Activated naive CD4-positive, alpha-beta T cell treated with anti-CD3 and anti-CD28 coated beads for 36 hours (primary cell): ENCODE measurements at regions of chr1 and their contacts with region 1.

Region 1: DNA sequence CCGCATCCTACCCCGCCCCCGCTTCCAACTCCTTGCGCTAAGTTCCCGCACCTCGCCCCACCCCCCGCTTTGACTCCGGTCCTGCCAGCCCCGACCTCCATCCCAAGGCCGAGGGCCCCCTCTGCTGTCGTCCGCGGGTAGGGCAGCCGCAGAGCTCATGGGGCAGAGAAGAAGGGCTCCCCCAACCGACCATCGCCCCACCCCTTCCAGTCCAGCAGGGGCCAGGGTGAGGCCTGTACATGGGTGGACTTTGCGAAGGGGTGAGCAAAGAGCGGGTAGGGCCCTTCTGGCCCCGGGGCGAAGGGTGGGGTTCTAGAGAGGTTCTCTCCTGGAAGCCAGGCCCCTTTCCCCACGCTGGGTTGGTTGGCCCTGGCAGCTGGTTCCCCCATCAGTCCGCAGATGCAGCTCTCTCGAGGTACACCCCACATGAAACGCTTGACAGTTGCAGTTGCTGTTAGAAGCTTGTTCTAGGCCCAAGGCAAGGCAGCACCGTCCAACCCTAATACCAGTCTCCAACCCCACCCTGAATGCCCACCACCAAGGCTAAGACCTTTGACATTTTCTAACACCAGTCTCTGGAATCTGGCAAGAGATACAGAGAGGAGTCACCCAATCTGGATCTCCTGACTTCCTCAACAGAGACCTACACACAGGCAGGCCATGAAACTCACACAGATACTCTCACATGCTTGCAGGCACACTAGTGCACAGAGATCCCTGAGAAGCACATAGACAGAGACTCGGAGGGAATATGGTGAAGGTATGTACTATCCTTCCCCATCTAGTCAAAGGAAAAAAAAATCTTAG is 25.3 kb upstream of the ADGRB2 start:
- DNase-seq: peak; percentile 98
- H3K4me3 Mint-ChIP-seq: peak overlapping the region; percentile 81
- H3K27ac Mint-ChIP-seq: no peak overlapping the region
- H3K4me1 Mint-ChIP-seq: peaks cover 6% of the 10 kb centered on the region
- H3K27me3 Mint-ChIP-seq: no peaks in the 10 kb centered on the region

Region 2: DNA sequence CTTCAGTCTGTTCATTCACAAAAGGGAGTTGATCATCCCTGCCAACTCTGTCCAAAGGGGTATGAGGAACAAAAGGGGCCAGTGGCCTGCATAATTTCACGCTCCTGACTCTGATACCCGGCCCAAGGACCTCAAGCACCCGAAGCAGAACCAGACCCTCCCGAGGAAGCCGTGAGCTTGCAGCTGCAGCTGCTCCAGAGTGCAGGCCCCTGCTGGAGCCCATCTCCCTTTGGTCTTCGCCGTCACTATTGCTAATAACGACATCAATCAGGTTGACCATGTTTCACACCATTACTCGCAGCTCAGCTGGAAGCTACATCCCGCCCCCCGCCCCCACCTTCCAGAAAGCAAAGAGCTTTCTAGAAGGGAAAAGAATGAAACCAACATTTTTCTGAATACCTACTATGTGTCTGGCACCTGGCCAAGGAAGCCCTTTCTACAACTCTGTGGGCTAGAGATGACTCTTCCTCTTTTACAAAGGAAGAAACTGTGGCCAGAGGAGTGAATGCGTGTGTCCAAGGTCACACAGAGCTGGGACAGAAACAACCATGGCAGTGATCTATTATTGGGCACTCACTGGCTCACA is 555.2 kb before region 1 on chr1:
- CTCF ChIA-PET with region 1: no interaction called
- intact Hi-C with region 1: loop called (anchors 5 kb)
- DNase-seq: no peak
- H3K4me3 Mint-ChIP-seq: no peak overlapping the region
- H3K27ac Mint-ChIP-seq: no peak overlapping the region
- H3K4me1 Mint-ChIP-seq: peaks cover 6% of the 10 kb centered on the region
- H3K27me3 Mint-ChIP-seq: peaks cover 25% of the 10 kb centered on the region

Region 3: DNA sequence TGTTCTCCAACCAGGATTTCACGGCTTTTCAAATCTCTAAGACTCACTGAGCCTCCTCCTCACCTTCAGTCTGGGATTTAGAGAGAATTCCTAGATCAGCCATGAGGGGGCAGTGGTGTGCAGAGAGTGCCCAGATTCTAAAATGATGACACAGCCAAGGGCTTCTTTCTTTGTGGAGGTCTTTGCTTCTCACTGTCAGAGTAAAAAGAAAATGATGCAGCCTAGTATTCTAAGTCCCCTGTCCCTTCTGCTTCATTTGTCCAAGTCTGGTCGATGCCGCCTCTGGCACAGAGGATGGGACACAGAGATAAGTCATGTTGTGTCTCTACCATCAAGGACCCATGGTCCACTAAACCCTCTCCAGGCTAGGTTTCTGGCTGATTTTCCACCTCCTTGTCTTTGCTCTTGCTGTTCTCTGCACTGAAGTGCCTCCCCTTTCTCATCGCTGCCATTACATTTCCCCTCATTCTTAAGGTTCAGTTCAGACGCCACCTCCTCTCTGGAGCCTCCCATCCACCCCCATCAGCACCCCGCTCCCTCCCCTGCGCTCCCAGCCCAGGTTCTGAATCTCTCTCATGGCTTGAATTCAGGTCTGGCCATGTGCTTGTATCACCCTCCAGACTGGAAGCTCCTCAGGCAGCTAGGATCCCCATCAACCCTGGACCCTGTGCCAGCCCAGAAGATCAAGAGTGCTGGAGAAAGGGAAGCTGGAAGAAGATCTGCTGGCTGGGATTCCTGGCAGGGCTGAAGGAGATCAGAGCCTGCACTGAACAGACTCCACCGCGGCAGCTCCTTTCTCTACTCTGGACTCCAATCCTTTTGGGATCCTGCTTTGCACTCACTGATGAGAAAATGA is 225.1 kb before region 1 on chr1:
- CTCF ChIA-PET with region 1: interaction called, 13 read pairs
- intact Hi-C with region 1: loop called (anchors 1 kb)
- DNase-seq: peak; percentile 68
- H3K4me3 Mint-ChIP-seq: no peak overlapping the region
- H3K27ac Mint-ChIP-seq: no peak overlapping the region
- H3K4me1 Mint-ChIP-seq: no peaks in the 10 kb centered on the region
- H3K27me3 Mint-ChIP-seq: peaks cover 15% of the 10 kb centered on the region

Region 4: DNA sequence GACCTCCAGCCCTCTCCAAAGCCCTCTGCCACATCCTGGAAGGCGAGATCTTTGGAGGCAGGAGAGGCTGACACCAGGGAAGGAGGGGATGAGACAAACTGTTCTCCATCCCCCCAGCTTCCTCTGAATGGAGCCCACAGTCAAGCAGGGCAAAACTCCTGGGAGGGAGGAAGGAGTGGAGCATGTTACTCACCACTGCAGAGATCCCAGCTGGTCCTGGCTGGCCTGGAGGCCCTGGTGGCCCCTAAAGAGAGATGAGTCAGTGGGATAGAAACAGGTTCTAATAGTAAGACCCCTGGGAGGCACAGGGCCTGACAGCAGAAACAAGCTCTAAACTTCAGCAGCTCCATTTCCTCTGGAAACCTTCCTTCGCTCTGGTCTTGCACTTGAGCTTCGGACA is 130.7 kb before region 1 on chr1:
- CTCF ChIA-PET with region 1: interaction called, 21 read pairs
- intact Hi-C with region 1: no loop called
- DNase-seq: no peak
- H3K4me3 Mint-ChIP-seq: no peak overlapping the region
- H3K27ac Mint-ChIP-seq: no peak overlapping the region
- H3K4me1 Mint-ChIP-seq: no peaks in the 10 kb centered on the region
- H3K27me3 Mint-ChIP-seq: no peaks in the 10 kb centered on the region

Region 5: GRCh38 chr1:31705080-31705866 is 84.2 kb before region 1 on chr1:
- CTCF ChIA-PET with region 1: interaction called, 16 read pairs
- intact Hi-C with region 1: loop called (anchors 2 kb)
- DNase-seq: peak; percentile 87
- H3K4me3 Mint-ChIP-seq: peak overlapping the region; percentile 16
- H3K27ac Mint-ChIP-seq: no peak overlapping the region
- H3K4me1 Mint-ChIP-seq: peaks cover 28% of the 10 kb centered on the region
- H3K27me3 Mint-ChIP-seq: peaks cover 37% of the 10 kb centered on the region

Region 6: DNA sequence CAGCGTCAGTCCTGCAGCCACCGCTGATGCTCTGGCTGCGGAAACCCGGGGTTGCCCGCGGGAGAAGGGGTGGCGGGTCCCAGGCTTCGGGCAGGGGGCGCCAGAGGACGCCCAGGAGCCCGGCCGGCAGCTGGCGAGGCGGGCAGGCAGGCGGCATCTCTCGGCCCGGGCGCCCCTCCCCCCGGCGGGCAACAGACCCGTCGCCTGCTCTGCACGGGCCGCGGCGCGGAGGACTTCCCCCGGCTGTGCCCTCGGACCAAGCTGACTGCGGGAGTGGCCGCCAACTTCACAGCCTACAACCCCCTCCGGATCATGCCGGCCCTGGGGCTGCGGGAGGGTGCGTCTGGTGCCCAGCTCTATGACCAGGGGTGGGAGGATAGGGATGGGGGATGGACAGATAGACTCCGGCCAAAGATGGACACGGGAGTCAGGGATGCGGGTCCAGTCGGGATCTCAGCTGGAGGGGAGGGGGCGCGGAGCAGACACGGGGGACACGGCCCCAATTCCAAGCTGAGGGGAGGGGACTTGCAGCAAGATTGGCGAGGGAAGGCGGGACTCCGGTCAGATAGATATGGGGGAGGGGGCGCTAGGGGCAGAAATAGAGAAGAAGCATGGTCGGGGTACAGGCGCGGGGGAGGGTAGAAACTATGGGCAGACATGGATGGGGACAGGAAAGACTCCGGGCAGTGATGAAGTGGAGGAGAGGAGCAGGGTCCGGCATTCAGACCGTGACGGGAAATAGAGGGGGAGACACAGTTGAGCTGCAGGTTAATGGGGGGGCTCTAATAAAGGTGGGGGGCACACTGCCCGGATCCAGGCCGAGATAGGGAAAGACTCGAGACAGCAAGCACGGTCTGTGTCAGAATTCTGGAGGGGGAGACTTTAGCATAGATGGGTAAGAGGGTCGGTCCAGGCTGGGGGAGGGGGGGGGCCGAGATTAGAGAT is 26.5 kb before region 1 on chr1:
- CTCF ChIA-PET with region 1: interaction called, 69 read pairs
- intact Hi-C with region 1: loop called (anchors 1 kb)
- DNase-seq: peak; percentile 80
- H3K4me3 Mint-ChIP-seq: peak overlapping the region; percentile 67
- H3K27ac Mint-ChIP-seq: no peak overlapping the region
- H3K4me1 Mint-ChIP-seq: peaks cover 20% of the 10 kb centered on the region
- H3K27me3 Mint-ChIP-seq: peaks cover 18% of the 10 kb centered on the region

Region 7: DNA sequence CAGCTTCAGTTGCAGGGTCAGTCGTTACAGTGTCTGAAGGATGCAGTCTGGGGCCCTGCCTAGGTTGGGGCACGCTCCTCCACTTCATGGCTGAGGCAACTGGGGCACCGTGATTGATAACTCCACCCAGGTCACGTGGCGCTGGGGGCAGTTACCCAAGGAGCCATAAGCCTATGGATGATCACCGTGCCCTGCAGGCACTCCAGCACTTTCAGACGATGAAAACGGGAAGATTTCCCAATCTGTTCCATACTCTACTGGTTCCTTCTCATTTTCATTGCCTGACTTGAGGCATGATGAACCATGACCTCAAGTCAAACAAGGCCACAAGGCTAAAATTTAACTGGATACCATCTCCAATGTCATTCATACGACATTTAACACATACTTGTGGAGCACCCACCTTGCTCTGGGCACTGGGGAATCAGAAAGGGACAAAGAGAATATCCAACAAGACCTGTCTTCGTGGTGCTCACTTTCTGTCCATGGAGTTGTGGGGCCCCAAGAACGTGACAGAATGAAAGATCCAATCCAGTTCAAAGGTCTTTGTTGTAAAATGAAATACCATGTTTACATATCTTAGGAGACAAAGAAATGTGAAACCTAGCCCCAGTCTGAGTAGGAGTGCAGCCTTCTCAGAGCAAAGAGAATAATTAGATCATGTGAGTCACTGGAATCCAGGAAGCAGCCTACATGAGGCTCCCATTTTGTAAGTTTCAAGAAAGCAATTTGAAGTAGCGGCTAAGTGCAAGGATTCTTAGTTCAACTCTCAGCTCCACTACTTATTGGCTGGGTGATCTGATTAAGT is 65.8 kb after region 1 on chr1:
- CTCF ChIA-PET with region 1: no interaction called
- intact Hi-C with region 1: no loop called
- DNase-seq: peak; percentile 31
- H3K4me3 Mint-ChIP-seq: no peak overlapping the region
- H3K27ac Mint-ChIP-seq: no peak overlapping the region
- H3K4me1 Mint-ChIP-seq: peaks cover 5% of the 10 kb centered on the region
- H3K27me3 Mint-ChIP-seq: no peaks in the 10 kb centered on the region